Psoas muscle (tissue), 8 donors: ENCODE measurements at regions of chr22 and their contacts with region 1.

Region 1: GRCh38 chr22:39532215-39533071 is at the start of gene RPS19BP1:
- DNase-seq: peak; percentile 99 to 100
- ATAC-seq: peak; percentile 90 to 91 (median 90)
- H3K4me3 ChIP-seq: peak within 1 kb of the TSS; percentile 99
- H3K27ac ChIP-seq: peak within 1 kb of the TSS; percentile 97
- H3K4me1 ChIP-seq: peaks cover 42% of the 10 kb centered on the region
- H3K27me3 ChIP-seq: no peaks in the 10 kb centered on the region
- CTCF ChIP-seq: no peak
- total RNA-seq, gene RPS19BP1: 34.0 to 52.6 (median 42.6) TPM

Region 2: GRCh38 chr22:39319270-39320022 is 213.0 kb before region 1 on chr22 and contains the start of gene RPL3:
- intact Hi-C with region 1: loop called in 1 of 2 experiments (anchors 5 kb)
- DNase-seq: peak; percentile 96 to 99
- ATAC-seq: peak; percentile 82 to 88 (median 84)
- H3K4me3 ChIP-seq: peak within 1 kb of the TSS; percentile 91
- H3K27ac ChIP-seq: peak within 1 kb of the TSS; percentile 95
- H3K4me1 ChIP-seq: peaks cover 37% of the 10 kb centered on the region
- H3K27me3 ChIP-seq: no peaks in the 10 kb centered on the region
- CTCF ChIP-seq: peak; percentile 24
- total RNA-seq, gene RPL3: 266 to 539 (median 329) TPM

Region 3: GRCh38 chr22:39405346-39406085 is 126.9 kb before region 1 on chr22:
- intact Hi-C with region 1: loop called (anchors 5 kb)
- DNase-seq: peak; percentile 50 to 54
- ATAC-seq: peak in 3 of 4 donors; percentile 28 to 56 (median 48)
- H3K4me3 ChIP-seq: no peak overlapping the region
- H3K27ac ChIP-seq: no peak overlapping the region
- H3K4me1 ChIP-seq: peaks cover 42% of the 10 kb centered on the region
- H3K27me3 ChIP-seq: no peaks in the 10 kb centered on the region
- CTCF ChIP-seq: no peak

Region 4: GRCh38 chr22:39502109-39502788 is 30.2 kb before region 1 on chr22 and contains the start of gene MIEF1:
- intact Hi-C with region 1: loop called in 1 of 2 experiments (anchors 2 kb)
- DNase-seq: peak; percentile 98 to 99
- ATAC-seq: peak; percentile 98 to 99 (median 99)
- H3K4me3 ChIP-seq: peak within 1 kb of the TSS; percentile 87
- H3K27ac ChIP-seq: peak within 1 kb of the TSS; percentile 91
- H3K4me1 ChIP-seq: peaks cover 19% of the 10 kb centered on the region
- H3K27me3 ChIP-seq: no peaks in the 10 kb centered on the region
- CTCF ChIP-seq: no peak
- total RNA-seq, gene MIEF1: 8.6 to 18.7 (median 13.3) TPM

Region 5: DNA sequence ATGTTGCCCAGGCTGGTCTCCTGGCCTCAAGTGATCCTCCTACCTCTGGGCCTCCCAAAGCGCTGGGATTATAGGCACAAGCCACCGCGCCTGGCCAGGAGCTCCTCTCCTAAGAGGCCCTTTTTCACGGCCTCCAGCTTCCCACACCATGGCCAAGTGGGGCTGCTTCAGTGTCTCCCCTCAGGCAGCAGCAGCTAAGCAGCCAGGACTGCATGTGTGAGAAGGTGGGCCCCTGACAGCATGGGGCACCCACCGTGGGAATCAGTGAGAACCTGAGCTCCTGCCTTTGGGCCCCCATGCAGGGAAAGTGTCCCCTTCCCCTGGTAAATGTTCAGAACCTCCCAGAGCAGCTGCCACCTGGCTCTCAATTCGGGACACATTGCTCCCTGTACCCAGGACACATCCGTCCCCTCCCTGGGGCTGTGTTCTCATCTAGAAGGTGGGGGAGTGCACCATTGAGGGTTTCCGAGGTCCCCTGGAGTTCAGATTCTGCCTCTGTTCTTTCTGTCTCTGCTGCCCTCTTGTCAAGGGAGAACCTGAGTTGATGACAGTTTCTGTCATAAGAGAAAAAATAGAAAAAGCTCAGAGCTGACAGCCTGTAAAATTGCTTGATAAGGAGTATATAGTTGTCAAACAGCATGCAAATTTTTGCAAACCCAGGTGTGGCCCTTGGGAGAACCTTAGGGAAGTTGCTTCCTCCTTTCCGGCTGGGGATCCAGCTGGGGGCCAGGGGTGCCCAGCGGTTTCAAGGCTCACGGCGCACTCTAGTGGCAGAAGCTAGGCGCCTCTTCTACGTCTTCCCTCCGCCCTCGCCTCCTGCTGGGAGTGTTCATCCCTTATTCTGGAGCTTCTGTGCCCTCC is 492.0 kb after region 1 on chr22:
- intact Hi-C with region 1: loop called (anchors 1 to 5 kb)
- DNase-seq: peak; percentile 54 to 81
- ATAC-seq: peak; percentile 70 to 95 (median 83)
- H3K4me3 ChIP-seq: no peak overlapping the region
- H3K27ac ChIP-seq: no peak overlapping the region
- H3K4me1 ChIP-seq: no peaks in the 10 kb centered on the region
- H3K27me3 ChIP-seq: peaks cover 0 to 5% (median 5%) of the 10 kb centered on the region in 3 donors
- CTCF ChIP-seq: peak; percentile 76

Region 6: DNA sequence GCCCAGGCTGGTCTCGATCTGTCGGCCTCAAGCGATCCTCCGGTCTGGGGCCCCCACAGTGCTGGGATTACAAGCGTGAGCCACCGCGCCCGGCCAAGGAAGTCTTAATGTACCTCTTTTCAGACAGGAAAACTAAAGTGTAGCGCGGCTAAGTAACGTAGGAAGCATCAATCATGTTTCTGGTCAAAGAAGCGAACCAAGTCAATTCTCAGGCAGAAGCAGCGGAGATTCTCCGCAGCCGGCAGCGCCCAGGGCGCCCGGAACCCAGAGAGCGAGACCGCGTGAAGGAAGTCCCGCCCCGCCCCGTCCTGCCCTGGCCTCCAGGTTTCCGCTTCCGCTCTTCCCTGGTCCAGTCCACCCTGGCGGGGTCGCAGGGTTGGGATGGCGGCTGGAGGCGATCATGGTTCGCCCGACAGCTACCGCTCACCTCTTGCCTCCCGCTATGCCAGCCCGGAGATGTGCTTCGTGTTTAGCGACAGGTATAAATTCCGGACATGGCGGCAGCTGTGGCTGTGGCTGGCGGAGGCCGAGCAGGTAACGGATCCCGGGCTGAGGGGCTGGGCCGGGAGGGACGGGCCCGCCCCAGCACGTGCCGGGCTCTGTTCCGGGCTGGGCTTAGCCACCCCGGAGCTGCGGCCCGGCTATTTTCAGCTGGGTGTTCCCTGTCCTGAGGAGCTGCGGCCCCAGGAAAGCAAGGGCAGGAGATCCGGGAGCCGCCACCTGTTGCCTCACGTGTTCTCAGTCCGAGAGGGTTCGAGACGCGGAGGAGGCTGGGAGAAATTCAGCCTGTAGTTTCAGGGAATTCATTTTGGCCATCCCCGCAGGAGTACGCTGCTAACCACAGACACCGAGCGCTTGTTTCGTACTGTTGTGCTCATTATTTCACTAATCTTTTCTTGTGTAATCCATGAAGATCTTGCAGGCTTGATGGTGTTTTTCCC is 814.0 kb after region 1 on chr22 and contains the start of gene ADSL:
- intact Hi-C with region 1: loop called (anchors 5 to 10 kb)
- DNase-seq: peak; percentile 92 to 95
- ATAC-seq: peak; percentile 91 to 94 (median 92)
- H3K4me3 ChIP-seq: peak within 1 kb of the TSS; percentile 92
- H3K27ac ChIP-seq: peak within 1 kb of the TSS; percentile 97
- H3K4me1 ChIP-seq: peaks cover 53% of the 10 kb centered on the region
- H3K27me3 ChIP-seq: no peaks in the 10 kb centered on the region
- CTCF ChIP-seq: no peak
- total RNA-seq, gene ADSL: 114 to 170 (median 141) TPM